HepG2 (cell line): ENCODE measurements at regions of chr1 and their contacts with region 1.

Region 1: GRCh38 chr1:86774305-86775295 is 70.2 kb downstream of the SH3GLB1 start:
- DNase-seq: peak; percentile 100
- ATAC-seq: peak; percentile 90
- H3K4me3 ChIP-seq: peak overlapping the region; percentile 27 to 48 (median 31); a peak in 3 of 6 replicates
- H3K27ac ChIP-seq: peak overlapping the region; percentile 90
- H3K4me1 ChIP-seq: peaks cover 70% of the 10 kb centered on the region
- H3K27me3 ChIP-seq: no peaks in the 10 kb centered on the region
- CTCF ChIP-seq: no peak
- EP300 ChIP-seq: peak; percentile 91 to 99; a peak in 3 of 4 replicates
- POLR2A ChIP-seq: peak; percentile 54 to 72; a peak in 3 of 4 replicates
- RAD21 ChIP-seq: peak; percentile 6; the same call in 1 of the 2 replicates

Region 2: GRCh38 chr1:86704458-86704971 is 70.1 kb before region 1 on chr1 and contains the start of gene SH3GLB1:
- CTCF ChIA-PET with region 1: no interaction called
- POLR2A ChIA-PET with region 1: interaction called, 19 read pairs
- in situ Hi-C with region 1: no loop called
- intact Hi-C with region 1: loop called (anchors 10 kb)
- DNase-seq: peak; percentile 74
- ATAC-seq: peak; percentile 97
- H3K4me3 ChIP-seq: peak within 1 kb of the TSS; percentile 84 to 97 (median 95)
- H3K27ac ChIP-seq: peak within 1 kb of the TSS; percentile 90
- H3K4me1 ChIP-seq: peaks cover 34% of the 10 kb centered on the region
- H3K27me3 ChIP-seq: no peaks in the 10 kb centered on the region; a peak in 1 of 5 replicates
- CTCF ChIP-seq: peak; percentile 88
- EP300 ChIP-seq: no peak
- POLR2A ChIP-seq: peak; percentile 73
- RAD21 ChIP-seq: peak; percentile 78
- total RNA-seq, gene SH3GLB1: 41.5 and 55.7 TPM in 2 replicates

Region 3: DNA sequence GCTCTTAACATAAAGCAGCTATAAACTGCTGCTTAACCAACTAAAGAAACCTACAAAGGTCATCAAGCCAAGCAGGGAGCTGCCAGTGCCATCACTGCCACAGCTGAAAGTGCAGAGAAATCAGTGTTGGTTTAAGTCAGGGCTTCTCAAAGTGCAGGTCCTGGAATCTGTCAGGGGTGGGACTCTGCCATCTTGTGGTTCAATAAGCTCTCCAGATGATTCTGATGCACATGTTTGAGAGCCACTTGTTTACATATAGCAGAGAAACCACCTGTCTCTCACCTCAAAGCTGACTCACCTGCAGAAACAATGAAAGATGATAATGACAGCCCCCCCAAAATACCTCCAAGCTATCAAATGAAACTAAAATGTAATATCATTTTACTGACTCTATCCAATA is 20.9 kb before region 1 on chr1:
- CTCF ChIA-PET with region 1: no interaction called
- POLR2A ChIA-PET with region 1: interaction called, 34 read pairs
- in situ Hi-C with region 1: no loop called
- intact Hi-C with region 1: loop called (anchors 2 kb)
- DNase-seq: peak; percentile 67
- ATAC-seq: peak; percentile 73
- H3K4me3 ChIP-seq: no peak overlapping the region
- H3K27ac ChIP-seq: no peak overlapping the region
- H3K4me1 ChIP-seq: peaks cover 43% of the 10 kb centered on the region
- H3K27me3 ChIP-seq: no peaks in the 10 kb centered on the region
- CTCF ChIP-seq: peak; percentile 47
- EP300 ChIP-seq: no peak
- POLR2A ChIP-seq: no peak
- RAD21 ChIP-seq: no peak

Region 4: DNA sequence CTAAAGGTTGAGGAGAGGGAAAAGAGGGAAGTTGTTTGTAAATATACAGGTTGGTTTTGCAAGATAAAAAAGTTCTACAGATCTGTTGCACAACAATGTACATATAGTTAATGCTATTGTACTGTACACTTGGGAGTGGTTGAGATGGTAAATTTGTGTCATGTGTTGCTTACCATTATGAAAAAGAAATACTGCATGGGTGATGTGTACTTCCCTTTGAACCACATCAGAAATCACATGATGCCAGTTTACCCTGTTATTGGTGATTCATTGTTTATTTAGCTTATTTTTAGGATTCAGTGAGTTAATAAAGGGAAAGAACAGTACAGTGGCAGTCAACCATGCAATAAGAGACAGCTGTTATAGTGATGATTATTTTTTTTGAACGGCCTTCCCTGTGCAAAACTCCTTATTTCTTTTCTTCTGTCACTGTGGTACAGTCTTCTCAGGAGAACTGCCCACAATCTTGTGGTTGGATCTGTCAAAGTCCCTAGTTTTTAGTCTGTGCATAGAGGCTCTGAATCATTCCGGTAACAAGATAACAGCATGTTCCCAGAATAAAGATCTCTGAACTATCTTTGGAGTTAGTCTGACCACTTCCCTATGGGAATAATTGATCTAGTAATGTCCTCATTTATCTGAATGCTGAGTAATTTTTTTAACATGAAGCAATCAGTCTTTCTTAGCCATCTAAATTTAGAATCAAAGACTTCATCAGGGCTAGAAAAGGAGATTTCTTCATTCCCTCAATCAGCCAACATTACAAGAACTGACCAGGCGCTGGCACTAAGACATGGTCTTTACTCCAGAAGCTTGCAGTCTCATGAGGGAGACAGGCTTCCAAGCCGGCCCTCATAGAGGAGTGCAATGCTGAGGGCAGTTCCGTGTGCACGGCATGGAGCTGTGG is 14.0 kb after region 1 on chr1:
- CTCF ChIA-PET with region 1: no interaction called
- POLR2A ChIA-PET with region 1: interaction called, 17 read pairs
- in situ Hi-C with region 1: no loop called
- intact Hi-C with region 1: no loop called
- DNase-seq: peak; percentile 78
- ATAC-seq: peak; percentile 6; the same call in 1 of the 3 replicates
- H3K4me3 ChIP-seq: no peak overlapping the region
- H3K27ac ChIP-seq: peak overlapping the region; percentile 33
- H3K4me1 ChIP-seq: peaks cover 44% of the 10 kb centered on the region
- H3K27me3 ChIP-seq: no peaks in the 10 kb centered on the region
- CTCF ChIP-seq: no peak
- EP300 ChIP-seq: peak in 1 of 2 experiments; percentile 79; a peak in 1 of 4 replicates
- POLR2A ChIP-seq: no peak
- RAD21 ChIP-seq: no peak

Region 5: GRCh38 chr1:86811142-86811924 is 36.7 kb after region 1 on chr1:
- CTCF ChIA-PET with region 1: no interaction called
- POLR2A ChIA-PET with region 1: interaction called, 7 read pairs
- in situ Hi-C with region 1: no loop called
- intact Hi-C with region 1: loop called (anchors 5 kb)
- DNase-seq: peak; percentile 36
- ATAC-seq: peak; percentile 100
- H3K4me3 ChIP-seq: peak overlapping the region in 1 of 3 experiments; percentile 3; a peak in 1 of 6 replicates
- H3K27ac ChIP-seq: peak overlapping the region; percentile 43
- H3K4me1 ChIP-seq: peaks cover 53% of the 10 kb centered on the region
- H3K27me3 ChIP-seq: no peaks in the 10 kb centered on the region
- CTCF ChIP-seq: peak; percentile 79
- EP300 ChIP-seq: 0 out of 4 replicates have a peak, but pooled peaks of 1 of the 2 experiments have one; percentile 8
- POLR2A ChIP-seq: no peak
- RAD21 ChIP-seq: peak; percentile 56

Region 6: DNA sequence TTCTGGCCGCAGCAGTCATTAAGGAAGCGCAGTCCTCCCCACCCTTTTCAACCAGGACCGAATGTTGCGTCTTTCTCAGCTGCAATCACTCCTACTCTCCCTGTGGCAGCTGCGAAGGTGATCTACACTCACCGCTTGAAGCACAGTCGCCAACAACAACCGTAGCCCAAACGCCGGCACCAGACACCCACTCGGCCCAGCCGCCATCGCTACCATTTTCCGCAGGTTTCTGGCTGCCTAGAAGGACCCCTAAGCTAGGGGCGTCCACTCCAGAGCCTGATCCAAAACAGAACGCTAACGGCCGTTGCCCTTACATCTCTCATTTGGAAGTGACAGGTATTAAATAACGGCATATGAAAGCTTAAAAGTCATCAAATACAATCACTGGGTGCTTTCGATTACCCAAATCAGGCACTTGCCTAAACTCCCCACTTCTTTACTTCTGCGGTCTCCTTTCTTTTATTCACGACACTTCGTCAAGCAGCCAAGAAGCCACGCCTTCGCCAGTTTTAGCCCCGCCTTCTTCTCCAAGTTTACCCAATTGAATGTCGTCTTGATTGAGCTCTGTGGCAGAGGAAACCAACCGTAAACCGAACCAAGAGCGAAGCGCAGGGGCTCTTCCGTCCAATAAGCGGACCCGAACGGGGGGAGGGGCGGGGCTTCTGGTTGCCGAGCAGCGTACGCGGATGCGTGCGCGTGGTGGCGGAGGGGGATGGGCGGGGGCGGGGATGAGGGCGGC is 139.5 kb after region 1 on chr1 and contains the start of gene SELENOF:
- CTCF ChIA-PET with region 1: no interaction called
- POLR2A ChIA-PET with region 1: interaction called, 15 read pairs
- in situ Hi-C with region 1: loop called (anchors 10 kb)
- intact Hi-C with region 1: loop called (anchors 2 kb)
- DNase-seq: peak; percentile 99
- ATAC-seq: peak; percentile 89
- H3K4me3 ChIP-seq: peak within 1 kb of the TSS; percentile 96 to 99 (median 96)
- H3K27ac ChIP-seq: peak within 1 kb of the TSS; percentile 95
- H3K4me1 ChIP-seq: peaks cover 55% of the 10 kb centered on the region
- H3K27me3 ChIP-seq: peaks cover 0 to 5% of the 10 kb centered on the region in 2 experiments; a peak in 2 of 5 replicates
- CTCF ChIP-seq: no peak
- EP300 ChIP-seq: no peak
- POLR2A ChIP-seq: peak; percentile 86 to 88
- RAD21 ChIP-seq: no peak
- total RNA-seq, gene SELENOF: 124 and 163 TPM in 2 replicates

Region 7: DNA sequence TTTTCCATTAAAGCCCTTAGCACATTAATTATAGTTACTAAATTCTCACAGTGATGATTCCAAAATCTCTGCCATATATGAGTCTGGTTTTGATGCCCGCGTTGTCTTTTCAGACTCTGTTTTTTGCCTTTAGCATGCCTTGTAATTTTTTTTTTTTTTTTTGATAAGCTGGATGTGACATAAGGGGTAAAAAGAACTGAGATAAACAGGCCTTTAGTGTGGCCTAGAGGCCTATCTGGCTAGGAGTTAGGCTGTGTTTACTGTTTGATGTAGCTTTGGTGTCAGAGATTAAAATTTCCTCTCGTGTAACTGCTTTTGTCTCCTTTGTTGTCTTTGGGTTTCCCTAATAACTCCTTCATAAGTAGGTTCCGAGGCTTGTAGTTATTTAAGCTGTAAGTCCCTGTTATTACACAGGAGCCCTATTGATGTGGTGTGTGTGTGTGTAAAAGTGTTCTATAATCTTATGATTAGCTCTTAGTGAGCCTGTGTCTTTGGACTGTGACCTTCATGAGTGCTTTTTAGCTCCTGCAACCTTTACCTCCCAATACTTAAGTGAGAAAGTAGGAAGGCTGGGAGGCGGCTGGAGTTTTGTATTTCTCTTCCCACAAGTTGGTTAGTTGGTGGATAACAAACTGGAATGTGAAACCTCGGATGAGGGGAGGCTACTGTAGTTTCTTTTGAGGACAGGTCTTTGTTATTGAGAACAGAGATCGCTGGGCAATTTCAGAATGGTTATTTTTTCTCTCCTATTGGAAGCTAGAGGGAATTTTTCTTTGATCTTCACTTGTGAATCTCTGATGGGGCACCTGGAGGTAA is 159.2 kb after region 1 on chr1:
- CTCF ChIA-PET with region 1: no interaction called
- POLR2A ChIA-PET with region 1: interaction called, 12 read pairs
- in situ Hi-C with region 1: no loop called
- intact Hi-C with region 1: no loop called
- DNase-seq: peak; percentile 52
- ATAC-seq: peak; percentile 85
- H3K4me3 ChIP-seq: peak overlapping the region; percentile 53 to 73 (median 63)
- H3K27ac ChIP-seq: peak overlapping the region; percentile 81
- H3K4me1 ChIP-seq: peaks cover 60% of the 10 kb centered on the region
- H3K27me3 ChIP-seq: no peaks in the 10 kb centered on the region
- CTCF ChIP-seq: no peak
- EP300 ChIP-seq: no peak; a peak in 1 of 4 replicates
- POLR2A ChIP-seq: no peak
- RAD21 ChIP-seq: no peak